ENCODE measurements at regions of chr5 and their contacts with region 1.

Region 1: DNA sequence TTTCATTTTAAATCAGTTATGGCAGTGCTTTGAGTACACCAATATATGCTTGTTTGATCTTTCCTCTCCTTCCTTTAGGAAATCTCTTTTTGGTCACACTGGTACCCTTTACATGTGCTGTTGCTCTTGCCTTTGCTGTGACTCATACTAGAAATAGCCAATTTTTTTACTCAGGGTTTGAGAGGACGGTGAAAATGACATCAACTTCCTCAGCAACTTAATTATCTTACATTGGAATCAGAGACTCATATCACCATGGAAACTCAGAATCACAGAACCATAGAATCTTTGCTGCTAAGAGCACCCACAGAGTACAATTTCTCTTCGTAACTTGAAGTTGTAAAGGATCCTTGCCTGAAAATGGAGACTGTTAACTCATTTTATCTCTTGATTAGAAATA is 13.8 kb upstream of the ZNF300 start:
- DNase-seq: no peak
- ATAC-seq: no peak
- H3K4me3 ChIP-seq: no peak overlapping the region
- H3K27ac ChIP-seq: no peak overlapping the region
- H3K4me1 ChIP-seq: no peaks in the 10 kb centered on the region
- H3K27me3 ChIP-seq: no peaks in the 10 kb centered on the region
- CTCF ChIP-seq: no peak

Region 2: DNA sequence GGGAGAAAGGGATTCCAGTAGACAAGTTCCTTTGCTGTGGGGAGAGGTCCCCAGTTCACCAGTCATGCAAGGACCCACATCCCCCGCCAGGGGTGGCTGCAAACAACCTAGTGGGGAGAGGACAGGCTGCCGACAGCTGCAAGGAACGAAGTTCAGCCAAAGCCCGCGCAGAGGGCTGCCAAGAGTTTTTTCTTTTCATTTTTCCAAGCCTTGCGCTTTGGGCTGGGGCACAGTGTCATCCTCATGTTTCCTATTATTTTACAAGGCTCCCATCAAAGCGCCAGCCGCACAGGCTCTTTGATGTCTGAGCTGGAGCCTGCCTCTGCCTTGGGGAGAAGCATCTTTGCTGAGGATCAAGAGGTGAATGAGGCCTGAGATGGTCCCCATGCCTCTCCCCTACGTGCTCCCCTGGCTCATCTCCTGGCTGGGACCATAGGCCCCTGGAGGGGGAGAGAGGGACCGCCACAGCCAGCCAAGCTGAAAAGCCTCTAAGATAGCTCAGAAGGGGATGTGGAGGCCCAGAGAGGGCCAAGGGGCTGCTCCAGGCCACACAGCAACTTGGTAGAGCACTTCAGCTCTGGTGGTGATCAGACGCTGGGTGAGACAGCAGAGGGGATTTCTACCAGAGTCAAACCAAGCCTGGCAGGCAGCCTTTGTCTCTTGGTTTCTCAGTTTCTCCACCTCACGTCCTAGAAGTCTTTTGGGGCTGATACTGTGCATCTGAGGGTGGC is 328.6 kb before region 1 on chr5:
- CTCF ChIA-PET with region 1: no interaction called
- POLR2A ChIA-PET with region 1: no interaction called
- in situ Hi-C with region 1: no loop called
- intact Hi-C with region 1: no loop called
- DNase-seq: no peak
- ATAC-seq: 0 out of 2 replicates have a peak, but pooled peaks have one; percentile 17
- H3K4me3 ChIP-seq: no peak overlapping the region
- H3K27ac ChIP-seq: no peak overlapping the region
- H3K4me1 ChIP-seq: no peaks in the 10 kb centered on the region
- H3K27me3 ChIP-seq: no peaks in the 10 kb centered on the region
- CTCF ChIP-seq: no peak

Region 3: GRCh38 chr5:150734579-150735384 is 183.8 kb before region 1 on chr5:
- CTCF ChIA-PET with region 1: no interaction called
- POLR2A ChIA-PET with region 1: no interaction called
- in situ Hi-C with region 1: no loop called
- intact Hi-C with region 1: no loop called
- DNase-seq: no peak
- ATAC-seq: no peak
- H3K4me3 ChIP-seq: no peak overlapping the region
- H3K27ac ChIP-seq: no peak overlapping the region
- H3K4me1 ChIP-seq: no peaks in the 10 kb centered on the region
- H3K27me3 ChIP-seq: no peaks in the 10 kb centered on the region
- CTCF ChIP-seq: no peak; the same call in 1 of the 2 replicates

Region 4: GRCh38 chr5:150862070-150862469 is 56.5 kb before region 1 on chr5:
- CTCF ChIA-PET with region 1: no interaction called
- POLR2A ChIA-PET with region 1: no interaction called
- in situ Hi-C with region 1: no loop called
- intact Hi-C with region 1: no loop called
- DNase-seq: no peak
- ATAC-seq: no peak
- H3K4me3 ChIP-seq: no peak overlapping the region
- H3K27ac ChIP-seq: no peak overlapping the region
- H3K4me1 ChIP-seq: no peaks in the 10 kb centered on the region
- H3K27me3 ChIP-seq: no peaks in the 10 kb centered on the region
- CTCF ChIP-seq: no peak

Region 5: GRCh38 chr5:150879358-150879757 is 39.3 kb before region 1 on chr5:
- CTCF ChIA-PET with region 1: no interaction called
- POLR2A ChIA-PET with region 1: no interaction called
- in situ Hi-C with region 1: no loop called
- intact Hi-C with region 1: loop called (anchors 5 kb)
- DNase-seq: no peak
- ATAC-seq: no peak
- H3K4me3 ChIP-seq: no peak overlapping the region
- H3K27ac ChIP-seq: no peak overlapping the region
- H3K4me1 ChIP-seq: no peaks in the 10 kb centered on the region
- H3K27me3 ChIP-seq: no peaks in the 10 kb centered on the region
- CTCF ChIP-seq: no peak